Aorta (tissue), 5 donors: ENCODE measurements at regions of chr2 and their contacts with region 1.

Region 1: DNA sequence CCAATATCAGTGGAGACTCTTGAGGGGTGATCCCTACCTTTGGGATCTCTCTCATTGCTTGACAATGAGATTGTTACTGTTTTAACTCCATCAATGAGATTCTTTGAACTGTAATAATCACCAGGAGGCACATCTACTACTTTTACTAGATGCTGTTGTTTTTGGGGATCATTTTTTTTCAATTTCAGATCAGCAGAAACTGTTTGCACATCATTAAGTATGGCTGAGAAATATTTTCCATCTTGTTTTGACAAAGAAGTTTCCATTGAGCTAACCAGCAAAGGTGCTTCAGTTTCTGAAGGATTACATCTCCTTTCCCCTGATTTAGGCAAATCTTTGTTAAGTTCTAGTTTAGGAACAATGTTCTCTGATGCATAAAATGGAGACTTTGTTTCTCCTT is 54.8 kb upstream of the SLC4A10 start:
- DNase-seq: no peak
- ATAC-seq: no peak
- H3K4me3 ChIP-seq: no peak overlapping the region
- H3K27ac ChIP-seq: no peak overlapping the region
- H3K4me1 ChIP-seq: no peaks in the 10 kb centered on the region
- H3K27me3 ChIP-seq: no peaks in the 10 kb centered on the region

Region 2: DNA sequence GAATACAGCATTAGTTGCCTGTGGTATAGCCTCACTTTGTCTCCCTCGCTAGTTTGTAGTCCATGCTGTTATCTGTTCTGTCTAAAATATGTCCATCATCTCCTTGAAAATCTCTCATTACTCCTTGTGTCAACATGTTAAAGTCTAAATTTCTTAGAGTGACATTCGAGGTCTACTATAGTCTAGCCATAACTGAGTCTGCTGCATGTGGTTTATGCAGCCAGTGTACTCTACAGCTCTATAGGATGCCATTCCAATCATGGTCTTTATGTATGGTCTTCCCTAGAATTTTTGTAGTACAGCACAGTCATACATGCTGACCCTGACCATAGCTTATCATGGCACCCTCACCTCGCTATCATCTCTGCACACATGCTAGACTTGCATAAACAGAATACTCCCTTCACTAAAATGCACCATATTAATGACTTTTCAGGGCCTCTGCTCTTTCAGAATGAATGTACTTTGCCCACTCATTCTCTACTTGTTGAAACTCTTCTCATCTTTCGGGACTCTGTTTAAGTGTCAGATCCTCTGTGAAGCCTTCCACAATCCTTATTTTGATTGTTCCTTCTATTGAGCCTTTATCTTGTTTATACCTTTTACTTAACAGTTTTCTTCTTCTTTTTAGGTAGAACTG is 396.4 kb before region 1 on chr2:
- intact Hi-C with region 1: no loop called
- DNase-seq: no peak
- ATAC-seq: no peak
- H3K4me3 ChIP-seq: no peak overlapping the region
- H3K27ac ChIP-seq: no peak overlapping the region
- H3K4me1 ChIP-seq: no peaks in the 10 kb centered on the region
- H3K27me3 ChIP-seq: no peaks in the 10 kb centered on the region

Region 3: GRCh38 chr2:162545250-162545649 is 975.8 kb after region 1 on chr2:
- intact Hi-C with region 1: loop called in 1 of 2 experiments (anchors 10 kb)
- DNase-seq: no peak
- ATAC-seq: no peak
- H3K4me3 ChIP-seq: no peak overlapping the region
- H3K27ac ChIP-seq: no peak overlapping the region
- H3K4me1 ChIP-seq: no peaks in the 10 kb centered on the region
- H3K27me3 ChIP-seq: no peaks in the 10 kb centered on the region